ENCODE measurements at regions of chr3 and their contacts with region 1.

Region 1: GRCh38 chr3:184543843-184544512 is 17.6 kb upstream of the EPHB3 start:
- DNase-seq: peak; percentile 85
- ATAC-seq: peak; percentile 81
- H3K4me3 ChIP-seq: no peak overlapping the region
- H3K4me3 Mint-ChIP-seq: no peak overlapping the region
- H3K27ac ChIP-seq: no peak overlapping the region
- H3K27ac Mint-ChIP-seq: no peak overlapping the region
- H3K4me1 ChIP-seq: peaks cover 6 to 13% of the 10 kb centered on the region in 2 donors
- H3K4me1 Mint-ChIP-seq: peaks cover 8% of the 10 kb centered on the region
- H3K27me3 ChIP-seq: peaks cover 0 to 21% (median 6%) of the 10 kb centered on the region in 4 experiments
- H3K27me3 Mint-ChIP-seq: peaks cover 29% of the 10 kb centered on the region
- CTCF ChIP-seq: peak; percentile 88

Region 2: DNA sequence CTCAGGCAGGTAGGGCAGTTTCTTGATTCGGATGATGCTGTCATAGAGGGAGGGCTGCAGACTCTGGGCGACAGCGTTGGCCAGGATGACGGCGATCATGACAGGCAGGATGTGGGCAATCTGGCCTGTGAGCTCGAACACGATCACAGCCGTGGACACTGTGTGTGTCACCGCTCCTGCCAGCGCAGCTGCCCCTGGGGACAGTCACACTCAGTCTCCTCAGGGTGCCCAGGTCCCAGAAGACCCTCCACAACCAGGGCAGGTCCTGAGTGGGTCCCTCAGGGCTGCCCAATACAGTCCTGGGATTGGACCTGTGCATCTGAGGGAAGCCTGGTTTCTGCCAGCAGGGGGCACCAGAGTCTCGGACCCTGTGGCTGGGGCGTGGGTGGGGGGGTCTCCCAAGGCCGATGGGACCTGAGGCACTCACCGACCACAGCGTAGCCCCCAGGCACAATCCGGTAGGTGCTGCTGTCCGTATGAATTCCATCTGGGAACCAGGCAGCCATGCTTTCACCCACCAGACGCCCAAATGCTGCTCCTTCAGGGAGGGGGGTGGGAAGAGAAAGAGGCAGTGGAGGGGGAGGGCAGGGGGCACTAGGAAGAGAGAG is 189.8 kb before region 1 on chr3:
- CTCF ChIA-PET with region 1: interaction called, 20 read pairs
- POLR2A ChIA-PET with region 1: no interaction called
- intact Hi-C with region 1: no loop called
- DNase-seq: peak; percentile 74
- ATAC-seq: peak; percentile 79
- H3K4me3 ChIP-seq: no peak overlapping the region
- H3K4me3 Mint-ChIP-seq: no peak overlapping the region
- H3K27ac ChIP-seq: no peak overlapping the region
- H3K27ac Mint-ChIP-seq: no peak overlapping the region
- H3K4me1 ChIP-seq: peaks cover 0 to 8% of the 10 kb centered on the region in 2 donors
- H3K4me1 Mint-ChIP-seq: no peaks in the 10 kb centered on the region
- H3K27me3 ChIP-seq: no peaks in the 10 kb centered on the region
- H3K27me3 Mint-ChIP-seq: no peaks in the 10 kb centered on the region
- CTCF ChIP-seq: peak; percentile 73

Region 3: DNA sequence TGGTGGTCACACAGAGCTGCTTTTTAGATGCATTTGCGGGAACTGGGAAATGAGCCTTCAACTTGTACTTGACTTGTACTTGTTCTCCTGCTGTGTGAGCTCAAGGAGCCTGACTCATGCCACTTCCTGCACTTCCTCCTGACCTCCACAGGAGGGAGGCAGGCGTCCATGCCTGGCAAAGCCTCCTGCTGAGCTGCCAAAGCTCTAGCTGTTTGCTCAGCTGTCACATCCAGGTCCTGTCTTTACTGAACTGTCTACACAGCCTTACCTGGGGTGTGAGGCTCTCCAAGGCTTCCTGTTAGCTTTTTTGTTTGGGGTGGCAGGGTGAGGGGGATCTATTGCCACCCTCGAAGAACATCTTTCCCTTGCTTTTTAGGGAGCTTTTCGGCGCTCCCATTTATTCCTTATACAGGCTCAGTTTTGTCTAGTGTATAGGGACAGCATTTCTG is 172.4 kb before region 1 on chr3:
- CTCF ChIA-PET with region 1: interaction called, 23 read pairs
- POLR2A ChIA-PET with region 1: no interaction called
- intact Hi-C with region 1: no loop called
- DNase-seq: peak; percentile 68
- ATAC-seq: peak; percentile 82
- H3K4me3 ChIP-seq: no peak overlapping the region
- H3K4me3 Mint-ChIP-seq: no peak overlapping the region
- H3K27ac ChIP-seq: no peak overlapping the region
- H3K27ac Mint-ChIP-seq: no peak overlapping the region
- H3K4me1 ChIP-seq: no peaks in the 10 kb centered on the region
- H3K4me1 Mint-ChIP-seq: peaks cover 2% of the 10 kb centered on the region
- H3K27me3 ChIP-seq: peaks cover 0 to 12% (median 0%) of the 10 kb centered on the region in 4 experiments
- H3K27me3 Mint-ChIP-seq: peaks cover 15% of the 10 kb centered on the region
- CTCF ChIP-seq: peak; percentile 72

Region 4: GRCh38 chr3:184523825-184524615 is 20.0 kb before region 1 on chr3:
- CTCF ChIA-PET with region 1: interaction called, 42 read pairs
- POLR2A ChIA-PET with region 1: no interaction called
- intact Hi-C with region 1: no loop called
- DNase-seq: no peak
- ATAC-seq: no peak
- H3K4me3 ChIP-seq: no peak overlapping the region
- H3K4me3 Mint-ChIP-seq: no peak overlapping the region
- H3K27ac ChIP-seq: no peak overlapping the region
- H3K27ac Mint-ChIP-seq: no peak overlapping the region
- H3K4me1 ChIP-seq: peaks cover 8 to 13% of the 10 kb centered on the region in 2 donors
- H3K4me1 Mint-ChIP-seq: peaks cover 9% of the 10 kb centered on the region
- H3K27me3 ChIP-seq: peaks cover 0 to 41% (median 29%) of the 10 kb centered on the region in 4 experiments
- H3K27me3 Mint-ChIP-seq: peaks cover 54% of the 10 kb centered on the region
- CTCF ChIP-seq: no peak

Region 5: DNA sequence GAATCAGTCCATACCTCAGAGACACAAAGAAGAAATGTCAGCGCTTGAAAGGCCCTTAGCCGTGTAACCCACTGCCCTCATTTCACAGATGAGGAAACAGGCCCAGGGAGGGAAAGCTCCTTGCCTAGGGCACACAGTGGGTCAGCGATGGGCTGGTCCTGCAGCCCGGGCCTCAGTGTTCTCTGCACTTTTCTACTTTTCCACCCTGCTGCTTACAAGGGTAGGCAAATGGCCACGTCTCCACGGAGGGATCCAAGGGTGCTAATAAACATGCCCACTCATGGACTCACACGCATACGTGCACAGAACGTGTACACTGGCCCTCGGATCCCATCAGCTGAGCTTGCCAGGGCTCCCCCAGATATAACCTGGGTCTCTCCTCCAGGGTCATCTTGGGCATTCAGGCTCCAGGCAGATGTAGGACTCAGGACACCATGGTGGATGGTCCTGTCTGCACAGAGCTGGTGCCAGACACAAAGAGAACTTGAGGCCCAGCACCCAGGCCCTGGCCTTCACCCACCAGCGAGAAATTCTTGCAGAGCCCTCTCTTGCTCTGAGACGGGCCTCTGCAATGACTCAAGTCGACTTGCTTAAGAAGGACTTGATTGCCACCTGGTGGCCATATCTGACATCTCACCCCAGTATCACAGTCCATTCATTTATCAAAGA is 233.5 kb after region 1 on chr3:
- CTCF ChIA-PET with region 1: interaction called, 14 read pairs
- POLR2A ChIA-PET with region 1: no interaction called
- intact Hi-C with region 1: loop called (anchors 1 kb)
- DNase-seq: peak; percentile 90
- ATAC-seq: peak; percentile 98
- H3K4me3 ChIP-seq: no peak overlapping the region
- H3K4me3 Mint-ChIP-seq: no peak overlapping the region
- H3K27ac ChIP-seq: no peak overlapping the region
- H3K27ac Mint-ChIP-seq: no peak overlapping the region
- H3K4me1 ChIP-seq: no peaks in the 10 kb centered on the region
- H3K4me1 Mint-ChIP-seq: no peaks in the 10 kb centered on the region
- H3K27me3 ChIP-seq: peaks cover 0 to 15% (median 0%) of the 10 kb centered on the region in 4 experiments
- H3K27me3 Mint-ChIP-seq: peaks cover 33% of the 10 kb centered on the region
- CTCF ChIP-seq: peak; percentile 79

Measured in B cell (primary cell).